HepG2 (cell line): ENCODE measurements at regions of chr2 and their contacts with region 1.

Region 1: DNA sequence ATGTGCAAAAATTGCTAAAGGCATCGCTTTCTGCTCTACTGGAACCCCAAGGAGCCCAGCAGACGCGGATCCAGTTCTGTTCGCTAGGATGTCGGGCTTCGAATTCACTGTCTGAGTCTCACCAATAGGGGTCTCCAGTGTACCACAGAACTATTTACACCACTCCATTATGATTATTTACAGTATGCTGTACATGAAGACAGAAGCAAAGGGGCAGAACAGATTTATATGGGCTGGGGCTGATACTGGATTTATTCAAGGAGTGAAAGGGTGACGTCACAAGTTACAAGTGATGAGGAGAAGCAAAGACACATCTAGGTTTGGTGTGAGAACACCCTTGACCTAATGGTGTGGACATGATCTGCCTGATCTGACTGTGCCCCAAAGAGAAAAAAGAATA is 185.3 kb upstream of the ATP5MC3 start:
- DNase-seq: peak; percentile 53
- ATAC-seq: peak; percentile 97
- H3K4me3 ChIP-seq: no peak overlapping the region
- H3K27ac ChIP-seq: no peak overlapping the region
- H3K4me1 ChIP-seq: no peaks in the 10 kb centered on the region
- H3K27me3 ChIP-seq: peaks cover 0 to 37% of the 10 kb centered on the region in 2 experiments; a peak in 3 of 5 replicates
- CTCF ChIP-seq: peak; percentile 91
- EP300 ChIP-seq: no peak
- POLR2A ChIP-seq: no peak
- RAD21 ChIP-seq: peak; percentile 84

Region 2: DNA sequence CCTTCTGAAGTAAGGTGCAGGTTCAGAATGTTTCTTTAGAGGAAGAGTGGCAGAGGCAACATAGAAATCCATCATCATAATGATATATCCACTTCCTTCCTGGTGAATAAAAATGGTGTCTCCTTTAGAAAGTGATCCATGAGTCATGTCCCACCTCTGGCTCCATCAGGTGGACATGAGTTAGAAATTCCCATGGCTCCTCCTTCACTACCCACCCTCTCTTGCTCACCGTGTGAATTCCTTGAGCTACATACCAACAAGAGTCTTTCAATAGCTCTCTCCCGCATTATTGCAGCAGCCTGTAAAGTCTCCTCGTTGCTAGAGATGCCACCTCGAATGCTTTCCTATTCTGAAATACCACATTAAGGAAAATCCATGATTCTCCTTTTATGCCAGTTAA is 317.6 kb after region 1 on chr2:
- CTCF ChIA-PET with region 1: no interaction called
- POLR2A ChIA-PET with region 1: no interaction called
- in situ Hi-C with region 1: loop called (anchors 10 kb)
- intact Hi-C with region 1: no loop called
- DNase-seq: peak; percentile 12
- ATAC-seq: 0 out of 3 replicates have a peak, but pooled peaks have one; percentile 32
- H3K4me3 ChIP-seq: no peak overlapping the region
- H3K27ac ChIP-seq: no peak overlapping the region
- H3K4me1 ChIP-seq: no peaks in the 10 kb centered on the region
- H3K27me3 ChIP-seq: no peaks in the 10 kb centered on the region
- CTCF ChIP-seq: peak; percentile 20; the same call in 1 of the 2 replicates
- EP300 ChIP-seq: no peak
- POLR2A ChIP-seq: no peak
- RAD21 ChIP-seq: no peak